MCF 10A (cell line): ENCODE measurements at regions of chr10 and their contacts with region 1.

Region 1: DNA sequence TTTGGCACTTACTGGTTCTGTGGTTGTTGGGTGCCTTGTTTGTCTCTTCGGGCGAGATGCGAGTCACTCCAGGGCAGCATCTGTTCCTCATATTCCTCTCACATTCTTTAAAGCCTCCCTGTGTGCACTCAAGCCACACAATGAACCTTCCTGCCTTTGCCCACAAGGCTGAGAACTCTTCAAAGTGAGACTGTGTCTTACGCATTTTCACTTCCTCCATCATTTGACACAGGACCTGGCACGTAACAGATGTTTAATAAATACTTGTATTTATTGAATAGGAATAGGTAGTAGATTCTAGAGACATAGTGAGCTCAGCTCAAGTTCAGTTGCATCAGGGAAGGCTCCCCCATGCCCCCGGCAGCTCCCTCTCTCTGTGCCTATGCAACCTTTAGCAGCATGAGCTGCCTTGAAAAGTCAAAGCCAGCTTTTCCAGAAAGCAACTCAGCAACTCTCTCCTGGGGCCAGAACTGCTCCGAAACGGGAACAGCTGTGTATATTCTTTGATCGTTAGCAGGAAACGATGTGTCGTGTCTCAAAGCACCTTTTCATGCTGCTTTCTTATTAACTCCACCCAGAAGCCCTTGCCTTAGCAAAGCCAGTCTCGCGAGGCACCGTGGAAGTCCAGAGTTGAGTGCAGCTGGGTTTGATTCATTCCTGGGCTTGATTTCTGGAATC is 97.5 kb downstream of the PFKFB3 start:
- DNase-seq: no peak
- H3K4me3 Mint-ChIP-seq: no peak overlapping the region
- H3K27ac Mint-ChIP-seq: peak overlapping the region; percentile 74
- H3K4me1 Mint-ChIP-seq: peaks cover 33% of the 10 kb centered on the region
- H3K27me3 Mint-ChIP-seq: no peaks in the 10 kb centered on the region
- CTCF ChIP-seq: no peak

Region 2: DNA sequence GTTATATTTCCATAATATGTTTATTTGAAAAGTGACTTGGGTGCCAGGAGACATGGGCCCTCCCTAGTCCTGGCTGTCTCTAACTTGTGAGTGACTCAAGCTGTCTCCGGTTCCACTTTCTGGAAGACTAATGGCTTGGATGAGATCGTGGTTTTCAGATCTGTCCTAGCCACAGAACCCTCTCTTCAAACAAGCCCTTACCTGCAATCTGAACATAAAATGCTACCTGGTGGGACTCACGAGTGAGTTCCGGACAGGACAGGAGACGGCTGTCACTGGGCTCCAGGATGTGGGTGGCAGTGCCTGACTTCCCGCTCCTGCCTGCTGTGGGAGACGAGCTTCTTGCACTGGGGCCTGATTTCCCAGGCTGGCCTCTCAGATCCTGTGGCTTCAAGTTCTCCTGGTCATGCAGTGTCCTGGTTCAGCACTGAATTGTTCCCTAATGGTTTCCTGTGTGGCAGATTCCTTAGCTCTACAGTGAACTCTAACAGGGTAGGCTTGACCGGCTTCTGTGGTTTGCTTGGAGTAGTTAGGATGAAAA is 123.5 kb before region 1 on chr10:
- CTCF ChIA-PET with region 1: no interaction called
- POLR2A ChIA-PET with region 1: no interaction called
- intact Hi-C with region 1: no loop called
- DNase-seq: peak; percentile 11
- H3K4me3 Mint-ChIP-seq: no peak overlapping the region
- H3K27ac Mint-ChIP-seq: no peak overlapping the region
- H3K4me1 Mint-ChIP-seq: peaks cover 16% of the 10 kb centered on the region
- H3K27me3 Mint-ChIP-seq: no peaks in the 10 kb centered on the region
- CTCF ChIP-seq: no peak

Region 3: DNA sequence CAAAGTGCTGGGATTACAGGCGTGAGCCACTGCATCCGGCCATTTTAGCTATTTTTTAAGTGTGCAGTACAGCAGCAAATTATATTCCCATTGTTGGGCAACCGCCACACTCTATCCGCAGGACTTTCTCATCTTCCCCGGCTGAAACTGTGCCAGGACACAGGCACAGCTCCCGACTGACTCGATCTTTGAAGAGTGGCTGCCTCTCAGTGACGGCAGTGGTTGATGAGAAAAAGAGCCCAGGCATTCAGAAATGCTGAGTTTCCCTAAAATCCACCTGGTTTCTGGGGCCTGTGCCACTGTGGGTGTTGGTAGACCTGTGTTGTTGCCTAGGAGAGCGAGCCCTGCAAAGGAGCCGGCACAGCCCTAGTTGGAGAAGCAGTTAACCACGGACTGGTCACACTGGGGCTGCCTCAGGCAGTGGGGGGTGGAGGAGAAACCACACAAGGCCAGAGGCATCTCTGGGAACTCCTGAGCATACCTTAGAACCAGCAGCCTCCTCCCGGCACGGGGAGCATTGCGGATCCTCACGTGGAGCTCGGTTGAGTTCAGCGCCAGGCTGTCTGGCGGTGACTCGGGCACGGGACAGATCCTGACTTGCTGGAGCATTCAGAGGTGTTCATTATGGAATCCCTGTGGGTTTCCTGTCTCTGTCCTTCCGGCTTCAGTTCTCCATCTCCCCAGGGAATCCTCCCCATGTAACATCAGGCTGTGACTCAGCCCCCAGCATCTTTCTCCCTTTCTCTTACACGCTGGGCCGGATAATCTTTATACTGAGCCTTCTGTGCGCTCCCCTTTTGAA is 81.4 kb before region 1 on chr10:
- CTCF ChIA-PET with region 1: interaction called, 3 read pairs
- POLR2A ChIA-PET with region 1: interaction called, 11 read pairs
- intact Hi-C with region 1: no loop called
- DNase-seq: peak; percentile 87
- H3K4me3 Mint-ChIP-seq: peak overlapping the region; percentile 3
- H3K27ac Mint-ChIP-seq: no peak overlapping the region
- H3K4me1 Mint-ChIP-seq: peaks cover 18% of the 10 kb centered on the region
- H3K27me3 Mint-ChIP-seq: no peaks in the 10 kb centered on the region
- CTCF ChIP-seq: no peak

Region 4: DNA sequence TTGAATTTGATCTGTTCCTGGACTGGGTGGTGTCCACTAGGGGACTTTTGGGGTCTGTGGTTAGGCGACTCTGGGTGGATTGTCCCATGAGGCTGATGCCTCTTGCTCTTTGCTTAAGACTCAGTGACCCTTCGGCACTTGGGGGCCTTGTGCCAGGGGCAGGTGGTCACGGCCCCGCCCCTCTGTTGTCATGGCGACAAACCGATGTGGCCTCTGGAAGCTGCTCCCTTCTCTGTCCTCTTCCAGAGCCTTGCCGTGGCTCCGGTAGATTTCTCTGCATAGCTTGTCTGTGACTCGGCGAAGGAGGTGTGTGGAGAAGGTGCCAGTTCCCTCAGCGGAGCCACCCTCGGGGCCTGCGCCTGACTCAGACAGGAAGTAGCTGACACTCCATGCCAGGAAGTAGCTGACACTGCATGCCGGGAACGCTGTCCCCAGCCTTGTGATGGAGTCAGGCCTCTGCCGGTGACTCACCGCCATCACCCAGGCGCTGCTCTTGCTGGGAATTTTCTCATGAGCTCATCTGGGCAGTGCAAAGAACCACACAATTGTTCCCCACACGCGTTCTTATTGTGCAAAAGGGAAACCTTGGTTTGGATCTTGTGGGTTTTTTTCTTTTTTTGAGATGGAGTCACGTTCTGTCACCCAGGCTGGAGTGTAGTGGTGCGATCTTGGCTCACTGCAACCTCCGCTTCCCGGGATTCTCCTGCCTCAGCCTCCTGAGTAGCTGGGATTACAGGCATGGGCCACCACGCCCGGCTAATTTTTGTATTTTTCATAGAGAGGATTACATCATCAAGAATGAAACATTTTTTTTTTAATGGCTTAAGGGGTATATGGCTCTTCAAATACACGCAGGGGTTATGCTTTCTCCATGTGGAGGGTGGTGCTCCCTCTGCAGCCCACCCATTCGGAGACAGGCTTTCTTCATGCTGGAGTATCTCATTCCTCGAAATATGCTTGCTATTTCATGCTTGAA is 24.9 kb before region 1 on chr10:
- CTCF ChIA-PET with region 1: interaction called, 3 read pairs
- POLR2A ChIA-PET with region 1: interaction called, 20 read pairs
- intact Hi-C with region 1: no loop called
- DNase-seq: peak; percentile 99
- H3K4me3 Mint-ChIP-seq: peak overlapping the region; percentile 68
- H3K27ac Mint-ChIP-seq: peak overlapping the region; percentile 94
- H3K4me1 Mint-ChIP-seq: peaks cover 11% of the 10 kb centered on the region
- H3K27me3 Mint-ChIP-seq: no peaks in the 10 kb centered on the region
- CTCF ChIP-seq: no peak